Head of caudate nucleus (tissue), 42 donors: ENCODE measurements at regions of chr7 and their contacts with region 1.

Region 1: DNA sequence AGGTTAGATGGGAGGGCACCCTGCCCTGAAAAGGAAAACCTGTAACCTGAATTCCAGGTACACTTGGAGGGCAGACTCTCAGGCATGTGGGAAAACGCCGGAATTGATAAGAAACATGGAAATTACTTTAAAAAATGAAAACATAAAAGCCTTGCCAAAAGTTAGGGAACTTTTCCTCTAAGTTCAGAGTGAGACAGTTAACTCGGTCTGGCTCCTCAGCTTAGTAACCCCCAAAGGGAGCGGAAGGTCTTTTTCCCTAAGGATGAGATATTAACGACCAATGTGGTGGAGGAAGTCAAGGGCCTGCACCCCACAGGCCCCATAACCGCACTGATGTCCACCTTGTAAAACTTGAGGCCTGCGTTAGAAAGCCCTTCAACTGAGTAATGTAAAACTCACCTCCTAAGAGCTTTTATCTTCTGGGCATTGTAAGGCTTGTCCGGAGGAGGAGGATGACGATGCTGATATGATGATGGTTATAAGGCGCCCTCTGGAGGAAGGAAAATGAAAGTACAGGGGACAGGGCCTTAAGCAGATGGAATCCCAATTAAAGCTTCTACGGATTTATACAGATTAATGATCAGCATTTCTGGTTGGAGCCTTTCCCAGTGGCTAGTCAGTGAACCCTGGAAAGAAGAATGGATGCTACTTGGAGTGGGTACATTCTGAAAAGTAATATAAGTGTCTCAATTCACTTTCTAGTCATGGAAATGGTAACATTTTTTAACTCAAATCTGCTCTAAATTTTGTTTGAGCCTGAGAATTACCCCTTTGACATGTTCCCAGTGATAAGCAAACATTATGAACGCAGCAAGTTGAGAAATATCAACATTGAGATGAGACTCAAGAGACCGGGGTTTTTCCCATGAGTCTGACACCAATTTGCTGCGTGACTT is 694 bp downstream of the COL1A2 start:
- DNase-seq: peak in 11 of 42 donors; percentile 11 to 65 (median 26)

Region 2: GRCh38 chr7:93601363-93601762 is 794.0 kb before region 1 on chr7:
- intact Hi-C with region 1: no loop called
- DNase-seq: no peak

Region 3: DNA sequence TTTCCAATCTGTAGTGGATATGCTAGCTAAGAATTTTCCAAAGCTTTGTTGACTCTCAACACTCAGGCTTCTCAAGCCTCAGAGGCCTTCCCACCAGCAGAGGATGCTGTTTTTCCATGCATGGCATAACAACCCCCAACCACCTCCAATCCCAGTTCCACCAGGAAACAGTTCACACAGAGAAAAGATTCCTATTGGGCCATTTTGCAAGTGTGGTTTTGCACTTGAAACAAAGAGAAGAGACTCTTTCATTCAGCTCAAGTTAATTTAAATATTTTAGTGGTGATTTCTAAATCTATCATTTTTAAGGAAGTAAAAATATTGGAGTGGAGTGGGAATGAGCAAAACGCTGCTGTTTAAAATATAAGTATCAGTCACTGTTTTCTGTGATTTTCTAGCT is 106.3 kb before region 1 on chr7:
- intact Hi-C with region 1: loop called (anchors 10 kb)
- DNase-seq: peak in 40 of 42 donors; percentile 19 to 80 (median 57)

Region 4: GRCh38 chr7:94486230-94486629 is 90.8 kb after region 1 on chr7:
- intact Hi-C with region 1: no loop called
- DNase-seq: no peak

Region 5: GRCh38 chr7:94547126-94547525 is 151.7 kb after region 1 on chr7:
- intact Hi-C with region 1: no loop called
- DNase-seq: no peak